ENCODE measurements at regions of chr12 and their contacts with region 1.

Region 1: GRCh38 chr12:111841750-111842555 is at the start of gene MAPKAPK5:
- DNase-seq: peak; percentile 97
- ATAC-seq: peak; percentile 81
- H3K4me3 Mint-ChIP-seq: peak within 1 kb of the TSS; percentile 87
- H3K27ac Mint-ChIP-seq: peak within 1 kb of the TSS; percentile 96
- H3K4me1 Mint-ChIP-seq: peaks cover 50% of the 10 kb centered on the region
- H3K27me3 Mint-ChIP-seq: no peaks in the 10 kb centered on the region
- total RNA-seq, gene MAPKAPK5: 47.5 to 57.5 TPM

Region 2: DNA sequence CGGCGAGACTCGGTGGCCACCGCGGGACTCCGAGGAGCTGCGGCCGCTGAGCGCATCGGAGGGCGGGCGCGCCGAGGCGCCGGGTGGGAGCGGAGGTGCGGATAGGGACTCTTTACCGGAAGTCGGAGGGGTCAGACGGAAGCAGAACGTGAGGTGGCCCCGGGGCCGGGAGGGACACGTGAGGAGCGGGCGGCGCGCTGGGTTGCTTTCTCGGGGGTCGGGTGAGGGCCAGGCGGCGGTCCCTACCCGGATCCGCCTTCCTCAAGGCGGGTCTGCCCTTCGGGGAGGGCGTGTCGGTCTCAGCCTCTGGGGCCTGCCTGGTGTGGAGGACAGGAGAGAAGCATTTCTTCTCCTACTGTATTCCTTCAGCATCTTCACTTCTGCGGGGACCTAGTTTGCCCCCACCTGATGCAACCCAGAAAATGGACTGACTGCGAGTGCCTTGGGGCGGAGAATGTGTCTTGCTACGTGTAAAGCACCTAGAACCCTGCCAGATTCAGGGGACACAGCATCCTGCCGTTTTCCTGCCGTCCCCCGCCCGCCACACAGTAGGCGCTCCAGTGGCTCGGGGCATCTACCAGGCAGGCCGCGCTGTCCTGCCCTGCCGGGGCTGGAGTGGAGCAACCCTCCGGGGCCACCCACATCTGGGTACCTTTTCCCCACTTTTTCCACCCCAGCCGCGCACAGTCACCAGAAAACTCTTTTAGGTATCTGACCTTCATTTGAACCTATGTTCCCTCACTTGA is 242.3 kb before region 1 on chr12:
- CTCF ChIA-PET with region 1: no interaction called
- POLR2A ChIA-PET with region 1: no interaction called
- intact Hi-C with region 1: loop called in 1 of 2 experiments (anchors 1 kb)
- DNase-seq: peak; percentile 91
- ATAC-seq: peak; percentile 83
- H3K4me3 Mint-ChIP-seq: peak overlapping the region; percentile 81
- H3K27ac Mint-ChIP-seq: peak overlapping the region; percentile 92
- H3K4me1 Mint-ChIP-seq: peaks cover 17% of the 10 kb centered on the region
- H3K27me3 Mint-ChIP-seq: no peaks in the 10 kb centered on the region

Region 3: DNA sequence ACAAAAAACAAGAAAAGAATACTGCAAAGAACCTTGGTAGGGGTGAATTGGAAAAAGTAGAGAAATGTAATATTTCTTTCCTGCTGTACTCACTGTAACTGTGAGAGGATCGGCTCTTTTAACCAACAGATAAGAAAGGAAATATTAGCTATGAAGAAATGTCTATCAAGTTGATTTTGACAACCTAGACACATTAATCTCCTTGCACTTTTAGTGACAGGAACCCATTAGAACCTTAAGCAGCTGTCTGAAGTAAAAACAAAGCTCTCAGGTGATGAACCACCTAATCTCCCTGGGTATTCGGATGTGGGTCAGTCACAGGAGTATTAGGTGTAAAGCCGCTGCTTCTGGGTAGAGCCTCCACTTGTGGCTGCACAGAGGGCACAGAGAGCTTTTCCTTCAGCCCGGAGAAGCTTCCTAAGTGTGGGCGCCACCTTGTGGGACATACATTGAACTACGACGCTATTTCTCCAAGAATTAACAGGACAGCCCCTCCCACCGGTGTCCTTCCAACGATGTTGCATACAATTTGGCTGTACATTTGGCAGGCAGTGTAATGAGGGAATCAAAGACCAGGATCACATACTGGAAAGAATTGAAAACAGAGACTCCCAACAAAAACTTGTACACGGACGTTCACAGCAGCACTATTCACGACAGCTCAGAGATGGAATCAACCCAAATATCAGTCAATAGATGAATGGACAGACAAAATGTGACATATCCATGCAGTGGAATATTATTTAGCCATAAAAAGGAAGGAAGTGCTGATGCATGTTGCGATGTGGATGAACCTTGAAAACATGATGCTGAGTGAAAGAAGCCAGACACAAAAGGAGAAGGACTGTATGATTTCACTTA is 28.8 kb before region 1 on chr12:
- CTCF ChIA-PET with region 1: interaction called, 10 read pairs
- POLR2A ChIA-PET with region 1: no interaction called
- intact Hi-C with region 1: no loop called
- DNase-seq: peak; percentile 81
- ATAC-seq: peak; percentile 98
- H3K4me3 Mint-ChIP-seq: no peak overlapping the region
- H3K27ac Mint-ChIP-seq: no peak overlapping the region
- H3K4me1 Mint-ChIP-seq: peaks cover 2% of the 10 kb centered on the region
- H3K27me3 Mint-ChIP-seq: no peaks in the 10 kb centered on the region

Region 4: DNA sequence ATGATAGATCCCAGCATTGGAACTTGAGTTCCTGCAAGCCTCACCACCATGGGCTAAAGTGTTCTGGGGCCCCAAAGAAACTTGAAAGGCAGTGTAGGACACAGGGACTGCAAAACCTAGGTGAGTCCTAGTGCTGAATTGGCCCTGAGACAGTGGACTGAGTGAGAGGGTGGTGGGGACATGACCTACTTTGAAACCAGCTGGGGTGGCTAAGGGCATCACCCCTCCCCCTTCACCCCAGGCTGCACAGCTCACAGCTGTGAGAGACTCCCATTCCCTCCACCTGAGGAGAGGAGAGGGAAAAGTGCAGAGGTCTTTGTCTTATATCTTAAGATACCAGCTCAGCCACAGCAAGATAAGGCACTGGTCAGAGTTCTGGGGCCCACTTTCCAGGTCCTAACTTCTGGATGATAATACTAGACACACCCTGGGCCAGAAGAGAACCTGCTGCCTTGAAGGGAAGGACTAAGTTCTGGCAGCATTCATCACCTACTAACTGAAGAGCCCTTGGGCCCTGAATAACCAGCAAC is 62.6 kb after region 1 on chr12:
- CTCF ChIA-PET with region 1: no interaction called
- POLR2A ChIA-PET with region 1: no interaction called
- intact Hi-C with region 1: no loop called
- DNase-seq: no peak
- ATAC-seq: no peak
- H3K4me3 Mint-ChIP-seq: no peak overlapping the region
- H3K27ac Mint-ChIP-seq: no peak overlapping the region
- H3K4me1 Mint-ChIP-seq: no peaks in the 10 kb centered on the region
- H3K27me3 Mint-ChIP-seq: no peaks in the 10 kb centered on the region

Region 5: GRCh38 chr12:112130441-112130998 is 288.6 kb after region 1 on chr12:
- CTCF ChIA-PET with region 1: no interaction called
- POLR2A ChIA-PET with region 1: no interaction called
- intact Hi-C with region 1: loop called in 1 of 2 experiments (anchors 2 kb)
- DNase-seq: no peak
- ATAC-seq: peak; percentile 73
- H3K4me3 Mint-ChIP-seq: peak overlapping the region; percentile 51
- H3K27ac Mint-ChIP-seq: peak overlapping the region; percentile 91
- H3K4me1 Mint-ChIP-seq: peaks cover 56% of the 10 kb centered on the region
- H3K27me3 Mint-ChIP-seq: no peaks in the 10 kb centered on the region

Region 6: DNA sequence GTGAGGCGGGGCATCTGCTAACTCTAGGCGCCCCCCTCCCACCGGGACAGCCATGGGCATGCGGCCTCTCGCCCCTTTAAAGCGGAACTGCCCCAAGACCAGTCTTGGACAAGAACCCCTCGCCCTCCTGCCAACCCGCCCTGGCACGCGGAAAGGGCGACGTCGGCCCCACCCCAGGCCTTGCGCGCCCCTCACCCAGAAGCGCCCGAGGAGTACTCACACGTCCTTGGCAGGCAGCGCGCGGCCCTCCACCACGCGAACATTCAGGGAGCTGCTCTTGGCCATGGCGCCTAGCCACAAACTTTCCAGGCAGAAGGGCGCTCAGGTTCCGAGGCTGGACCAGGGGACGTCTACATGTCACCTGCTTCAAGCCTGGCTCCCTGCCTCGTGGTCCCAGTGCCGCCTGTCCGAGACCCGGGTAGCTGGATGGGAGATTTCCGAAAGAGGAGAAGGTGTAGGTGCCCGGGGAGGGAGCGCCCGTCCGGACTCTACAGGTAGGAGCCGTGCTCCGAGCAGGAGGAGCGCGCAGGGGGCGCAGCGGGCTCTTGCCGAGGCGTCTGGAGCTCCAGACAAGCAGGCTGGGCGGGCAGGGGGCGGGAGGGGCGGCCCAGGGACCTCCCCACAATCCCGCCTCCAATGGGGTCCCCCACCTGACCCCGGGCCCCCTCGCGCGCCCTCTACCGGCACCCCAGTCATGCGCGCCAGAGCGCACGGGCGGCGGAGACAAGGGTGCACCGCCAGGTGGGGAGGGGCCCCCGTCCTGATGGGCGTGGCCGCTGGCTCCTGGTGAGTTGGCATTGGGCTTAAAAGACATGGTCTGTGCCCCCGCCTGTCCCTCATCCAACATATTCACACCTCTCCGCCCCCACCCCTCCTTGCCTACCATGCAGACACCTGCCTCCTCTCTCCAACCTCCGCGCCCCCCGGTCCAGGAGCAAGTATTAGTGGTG is 1293.5 kb after region 1 on chr12 and contains the start of gene RASAL1:
- CTCF ChIA-PET with region 1: no interaction called
- POLR2A ChIA-PET with region 1: no interaction called
- intact Hi-C with region 1: loop called in 1 of 2 experiments (anchors 2 kb)
- DNase-seq: peak; percentile 96
- ATAC-seq: peak; percentile 92
- H3K4me3 Mint-ChIP-seq: peak within 1 kb of the TSS; percentile 73
- H3K27ac Mint-ChIP-seq: peak within 1 kb of the TSS; percentile 92
- H3K4me1 Mint-ChIP-seq: peaks cover 16% of the 10 kb centered on the region
- H3K27me3 Mint-ChIP-seq: no peaks in the 10 kb centered on the region
- total RNA-seq, gene RASAL1: 9.0 to 10.6 TPM

Measured in activated CD4-positive, alpha-beta T cell treated with anti-CD3 and anti-CD28 coated beads for 36 hours (primary cell).